ENCODE measurements at regions of chr11 and their contacts with region 1.

Region 1: GRCh38 chr11:129331871-129332274 is 43.8 kb upstream of the BARX2 start:
- DNase-seq: peak; percentile 78 to 88 (median 87)
- H3K4me3 ChIP-seq: no peak overlapping the region
- H3K27ac ChIP-seq: no peak overlapping the region
- H3K4me1 ChIP-seq: no peaks in the 10 kb centered on the region
- H3K27me3 ChIP-seq: no peaks in the 10 kb centered on the region
- CTCF ChIP-seq: peak; percentile 87

Region 2: GRCh38 chr11:129117595-129118350 is 214.1 kb before region 1 on chr11:
- intact Hi-C with region 1: loop called (anchors 5 kb)
- DNase-seq: peak in 3 of 5 donors; percentile 61 to 87 (median 71)
- H3K4me3 ChIP-seq: no peak overlapping the region
- H3K27ac ChIP-seq: no peak overlapping the region
- H3K4me1 ChIP-seq: no peaks in the 10 kb centered on the region
- H3K27me3 ChIP-seq: no peaks in the 10 kb centered on the region
- CTCF ChIP-seq: peak; percentile 79

Measured in kidney (tissue), 22 donors.